Activated CD8-positive, alpha-beta T cell treated with anti-CD3 and anti-CD28 coated beads for 36 hours (primary cell): ENCODE measurements at regions of chr22 and their contacts with region 1.

Region 1: DNA sequence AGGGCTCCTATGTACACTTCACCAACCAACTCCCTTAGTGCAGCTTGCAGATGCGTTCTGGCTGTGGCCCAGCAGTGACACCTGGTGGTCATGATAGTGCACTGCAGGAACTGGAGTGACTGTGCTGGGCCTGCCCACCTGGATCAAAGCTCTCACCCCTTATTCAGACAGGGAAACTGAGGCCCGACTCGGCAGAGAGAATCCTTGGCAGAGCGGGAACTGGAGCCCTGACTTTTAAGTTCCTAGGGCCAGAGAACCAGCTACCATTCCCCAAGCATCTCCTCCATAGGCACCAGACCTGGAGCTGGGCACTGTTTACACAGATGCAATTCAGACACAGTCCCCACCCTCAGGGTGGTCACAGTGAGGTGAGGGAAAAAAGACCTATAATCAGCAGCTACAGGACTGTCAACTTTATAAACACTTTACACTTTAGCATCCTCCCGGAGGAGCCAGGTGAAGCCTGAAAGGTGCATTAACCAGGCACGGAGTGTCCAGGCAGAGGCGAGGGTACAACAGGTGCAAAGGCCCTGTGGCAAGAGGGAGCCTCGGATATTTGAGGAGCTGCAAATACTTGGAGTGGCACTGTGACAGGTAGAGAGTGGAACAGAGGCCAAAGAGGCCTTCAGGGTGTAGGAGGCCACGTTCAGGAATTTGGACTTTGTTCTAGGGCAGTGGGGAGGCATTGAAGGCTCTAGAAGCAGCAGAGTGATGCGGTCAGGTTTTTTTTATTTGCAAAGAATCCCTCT is 22.0 kb downstream of the RHBDD3 start:
- DNase-seq: peak; percentile 81
- ATAC-seq: peak; percentile 99
- H3K4me3 Mint-ChIP-seq: no peak overlapping the region
- H3K27ac Mint-ChIP-seq: no peak overlapping the region
- H3K4me1 Mint-ChIP-seq: no peaks in the 10 kb centered on the region
- H3K27me3 Mint-ChIP-seq: peaks cover 4% of the 10 kb centered on the region
- CTCF ChIP-seq: peak; percentile 98

Region 2: DNA sequence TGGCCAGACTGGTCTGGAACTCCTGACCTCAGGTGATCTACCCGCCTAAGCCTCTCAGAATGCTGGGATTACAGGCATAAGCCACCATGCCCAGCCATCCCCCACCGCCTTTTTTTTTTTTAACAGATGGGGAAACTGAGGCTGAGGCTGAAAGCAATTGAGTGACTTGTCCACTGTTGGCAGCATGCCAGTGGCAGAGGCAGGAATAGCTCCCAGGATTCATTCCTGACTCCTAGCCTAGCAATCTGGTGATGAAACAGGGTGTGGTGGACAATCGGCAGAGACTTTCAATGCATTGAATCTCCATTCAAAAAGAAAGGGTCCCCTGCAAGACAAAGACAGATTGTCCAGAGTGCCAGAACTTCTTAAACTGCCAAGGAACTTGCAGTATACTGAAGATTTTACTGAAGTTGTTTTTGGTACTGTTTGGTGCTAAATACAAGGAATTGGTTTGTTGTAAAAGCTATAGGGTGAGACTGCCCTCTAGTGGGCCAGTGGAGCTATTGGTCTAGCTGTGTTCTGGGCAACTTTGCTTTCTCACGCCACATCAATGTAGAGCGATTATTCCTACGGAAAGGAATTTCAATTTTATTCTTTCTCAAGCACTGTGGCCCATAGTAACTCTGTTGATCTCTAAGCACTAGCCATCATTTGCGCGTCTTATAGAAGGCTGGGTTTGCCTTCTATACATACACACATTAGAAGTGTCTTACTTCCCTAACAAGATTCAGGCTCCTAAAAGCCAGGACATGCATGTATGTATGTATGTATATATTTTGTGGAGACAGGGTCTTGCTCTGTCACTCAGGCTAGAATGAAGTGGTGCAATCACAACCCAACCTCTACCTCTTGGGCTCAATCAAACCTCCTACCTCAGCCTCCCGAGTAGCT is 205.2 kb before region 1 on chr22:
- CTCF ChIA-PET with region 1: interaction called, 11 read pairs
- POLR2A ChIA-PET with region 1: no interaction called
- intact Hi-C with region 1: no loop called
- DNase-seq: peak; percentile 77
- ATAC-seq: peak; percentile 75
- H3K4me3 Mint-ChIP-seq: no peak overlapping the region
- H3K27ac Mint-ChIP-seq: no peak overlapping the region
- H3K4me1 Mint-ChIP-seq: no peaks in the 10 kb centered on the region
- H3K27me3 Mint-ChIP-seq: peaks cover 2% of the 10 kb centered on the region
- CTCF ChIP-seq: peak; percentile 96

Region 3: DNA sequence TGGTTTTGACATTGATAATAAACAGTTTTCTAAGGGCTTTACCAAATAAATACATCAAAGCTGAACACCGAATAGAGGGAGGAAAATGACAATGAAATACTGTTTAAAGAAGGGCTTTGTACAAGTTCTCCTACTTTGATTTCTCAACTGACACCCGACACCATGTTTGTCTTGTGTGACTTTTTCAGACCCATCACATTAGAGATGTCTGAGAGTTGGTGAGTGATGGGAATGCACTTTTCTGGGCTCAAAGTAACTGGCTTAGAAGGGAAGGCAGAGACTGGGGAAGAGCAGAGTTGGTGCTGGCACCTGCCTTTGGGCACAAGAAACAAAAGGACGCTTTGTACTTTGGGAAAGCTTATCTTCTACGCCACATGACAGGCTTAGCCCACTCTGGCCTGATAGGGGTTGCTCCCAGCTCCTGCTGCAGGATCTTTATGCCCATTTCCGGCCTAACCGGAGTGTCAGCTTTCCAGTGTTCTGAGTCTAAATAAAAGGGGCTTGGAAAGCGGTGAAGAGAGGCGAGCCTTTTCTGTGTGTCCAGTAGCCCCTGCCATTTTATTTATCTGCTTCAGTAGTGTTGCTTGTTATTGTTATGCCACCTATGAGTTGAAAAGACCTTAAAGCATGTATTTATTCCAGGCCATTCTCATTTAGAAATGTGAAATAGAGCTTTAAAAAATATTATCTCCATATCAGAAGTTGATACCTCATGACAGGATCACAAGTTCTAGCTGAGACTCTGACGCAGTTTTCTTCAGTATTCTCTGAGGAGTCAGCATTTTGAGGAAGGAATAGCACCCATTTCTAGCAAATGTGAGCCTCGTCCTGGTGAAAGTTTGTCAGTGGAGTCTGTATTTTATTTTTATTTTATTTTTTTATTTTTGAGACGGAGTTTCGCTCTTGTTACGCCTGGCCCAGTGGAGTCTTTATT is 148.8 kb before region 1 on chr22:
- CTCF ChIA-PET with region 1: interaction called, 10 read pairs
- POLR2A ChIA-PET with region 1: no interaction called
- intact Hi-C with region 1: no loop called
- DNase-seq: no peak
- ATAC-seq: no peak
- H3K4me3 Mint-ChIP-seq: no peak overlapping the region
- H3K27ac Mint-ChIP-seq: no peak overlapping the region
- H3K4me1 Mint-ChIP-seq: no peaks in the 10 kb centered on the region
- H3K27me3 Mint-ChIP-seq: peaks cover 2% of the 10 kb centered on the region
- CTCF ChIP-seq: no peak

Region 4: DNA sequence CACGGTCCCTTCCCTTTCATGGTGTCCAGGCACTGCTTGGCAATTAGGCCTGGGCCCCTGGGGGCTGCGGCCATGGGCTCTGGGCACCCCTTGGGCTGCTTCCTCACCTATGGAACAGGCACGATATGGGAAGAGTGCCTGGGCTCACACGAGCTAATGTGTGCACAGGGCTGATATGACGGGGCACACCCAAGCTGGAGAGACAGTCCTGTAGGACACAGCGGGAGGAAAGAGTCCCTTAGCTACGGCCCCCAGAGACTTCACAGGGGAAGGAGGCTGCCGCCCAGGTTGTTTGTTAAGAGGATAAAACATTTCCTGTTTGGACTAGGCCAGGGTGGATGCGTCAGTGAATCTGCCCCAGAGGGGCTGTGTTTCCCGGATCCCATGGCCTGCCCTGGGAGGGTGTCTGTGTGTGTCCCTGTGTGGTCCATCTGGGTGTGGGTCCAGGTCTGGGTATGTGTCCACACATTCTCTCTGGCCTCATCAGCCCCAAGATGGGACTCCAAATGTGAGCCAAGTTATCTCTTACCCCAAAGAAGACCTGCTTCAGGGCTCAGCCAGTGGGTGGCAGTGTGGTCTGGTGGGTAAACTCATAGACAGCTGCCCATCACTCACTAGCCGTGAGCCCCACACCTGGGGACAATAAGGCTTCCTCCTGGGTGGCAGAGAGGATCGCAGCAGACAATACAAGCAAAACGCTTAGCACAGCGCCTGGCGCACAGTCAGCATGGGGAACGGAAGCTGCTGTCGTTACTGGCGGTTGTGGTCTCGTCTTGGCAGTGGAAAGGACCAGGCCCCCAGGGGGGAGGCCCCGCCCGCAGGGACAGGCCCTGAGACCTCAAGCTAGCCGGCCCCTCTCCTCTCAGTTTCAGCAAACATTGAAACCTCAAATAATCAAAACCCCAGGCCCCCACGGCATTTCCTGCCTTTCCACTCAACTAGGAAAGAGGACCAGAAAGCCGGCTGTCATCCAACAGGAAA is 43.3 kb before region 1 on chr22:
- CTCF ChIA-PET with region 1: interaction called, 19 read pairs
- POLR2A ChIA-PET with region 1: interaction called, 3 read pairs
- intact Hi-C with region 1: no loop called
- DNase-seq: peak; percentile 91
- ATAC-seq: peak; percentile 89
- H3K4me3 Mint-ChIP-seq: no peak overlapping the region
- H3K27ac Mint-ChIP-seq: peak overlapping the region; percentile 80
- H3K4me1 Mint-ChIP-seq: peaks cover 25% of the 10 kb centered on the region
- H3K27me3 Mint-ChIP-seq: peaks cover 48% of the 10 kb centered on the region
- CTCF ChIP-seq: no peak

Region 5: DNA sequence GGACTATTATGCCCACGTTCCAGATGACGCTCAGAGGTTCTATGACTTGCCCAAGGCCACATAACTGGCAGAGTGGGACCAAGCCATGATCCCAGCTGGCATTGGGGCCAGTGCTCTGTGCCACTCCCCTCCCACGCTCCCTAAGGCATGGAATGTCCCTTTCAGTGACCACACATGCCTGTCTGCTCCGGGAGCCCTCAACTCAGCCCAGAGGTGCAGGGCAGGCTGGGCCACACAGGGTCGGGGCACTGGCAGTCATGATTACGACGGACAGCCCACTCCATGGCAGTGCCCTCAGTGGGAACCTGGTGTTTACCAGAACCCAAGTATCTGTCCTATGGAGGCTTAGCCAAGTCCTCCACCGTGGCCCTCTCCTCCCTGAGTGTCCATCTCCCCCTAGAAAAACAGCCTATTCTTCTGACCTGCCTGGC is 12.0 kb after region 1 on chr22:
- CTCF ChIA-PET with region 1: interaction called, 11 read pairs
- POLR2A ChIA-PET with region 1: no interaction called
- intact Hi-C with region 1: no loop called
- DNase-seq: no peak
- ATAC-seq: no peak
- H3K4me3 Mint-ChIP-seq: no peak overlapping the region
- H3K27ac Mint-ChIP-seq: no peak overlapping the region
- H3K4me1 Mint-ChIP-seq: peaks cover 2% of the 10 kb centered on the region
- H3K27me3 Mint-ChIP-seq: no peaks in the 10 kb centered on the region
- CTCF ChIP-seq: no peak

Region 6: GRCh38 chr22:29553351-29554224 is 307.8 kb after region 1 on chr22 and contains the start of gene THOC5:
- CTCF ChIA-PET with region 1: no interaction called
- POLR2A ChIA-PET with region 1: no interaction called
- intact Hi-C with region 1: no loop called
- DNase-seq: peak; percentile 93
- ATAC-seq: peak; percentile 97
- H3K4me3 Mint-ChIP-seq: peak within 1 kb of the TSS; percentile 79
- H3K27ac Mint-ChIP-seq: peak within 1 kb of the TSS; percentile 95
- H3K4me1 Mint-ChIP-seq: peaks cover 13% of the 10 kb centered on the region
- H3K27me3 Mint-ChIP-seq: no peaks in the 10 kb centered on the region
- CTCF ChIP-seq: peak; percentile 17
- total RNA-seq, gene THOC5: 48.7 to 57.3 TPM